Activated naive CD4-positive, alpha-beta T cell treated with anti-CD3 and anti-CD28 coated beads, Interleukin-2, amount 10 ng/mL, durations not matched to agents 7 days and 5 days (primary cell): ENCODE measurements at regions of chr13 and their contacts with region 1.

Region 1: GRCh38 chr13:94674609-94675348 is 37.6 kb downstream of the SOX21 start:
- DNase-seq: peak; percentile 67
- H3K4me3 Mint-ChIP-seq: no peak overlapping the region
- H3K27ac Mint-ChIP-seq: no peak overlapping the region
- H3K4me1 Mint-ChIP-seq: no peaks in the 10 kb centered on the region
- H3K27me3 Mint-ChIP-seq: peaks cover 17% of the 10 kb centered on the region

Region 2: GRCh38 chr13:94470126-94470525 is 204.7 kb before region 1 on chr13:
- CTCF ChIA-PET with region 1: no interaction called
- DNase-seq: no peak
- H3K4me3 Mint-ChIP-seq: no peak overlapping the region
- H3K27ac Mint-ChIP-seq: no peak overlapping the region
- H3K4me1 Mint-ChIP-seq: no peaks in the 10 kb centered on the region
- H3K27me3 Mint-ChIP-seq: no peaks in the 10 kb centered on the region

Region 3: DNA sequence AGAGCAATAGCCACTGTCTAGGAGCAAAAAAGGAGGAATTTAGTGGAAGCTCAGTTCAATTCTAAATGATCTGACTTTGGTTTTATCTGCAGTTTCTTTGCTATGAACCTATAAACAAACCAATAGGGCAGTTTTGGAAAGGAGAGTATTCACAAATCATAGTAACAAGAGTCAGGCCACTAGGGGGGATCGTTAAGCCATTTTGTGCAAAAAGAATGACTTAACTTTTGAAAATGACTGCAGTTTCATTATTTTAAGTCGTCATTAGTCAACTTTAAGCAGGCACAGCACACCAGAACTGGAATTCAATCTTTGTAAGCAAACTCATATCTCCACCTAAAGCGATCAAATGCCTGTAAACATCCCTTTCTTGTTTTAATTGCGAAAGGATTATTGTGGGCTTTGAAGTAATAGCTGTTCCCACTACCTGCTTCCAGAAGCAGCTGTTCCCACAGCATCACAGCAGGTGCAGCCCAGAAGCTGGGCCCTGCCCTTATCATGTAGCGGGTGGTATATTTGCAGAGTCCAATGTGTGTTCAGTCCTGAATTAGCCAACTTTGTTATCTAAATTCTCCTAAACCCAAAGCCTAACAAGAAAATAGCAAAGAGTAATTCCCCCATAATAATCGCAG is 14.0 kb before region 1 on chr13:
- CTCF ChIA-PET with region 1: interaction called, 13 read pairs
- DNase-seq: no peak
- H3K4me3 Mint-ChIP-seq: no peak overlapping the region
- H3K27ac Mint-ChIP-seq: no peak overlapping the region
- H3K4me1 Mint-ChIP-seq: peaks cover 4% of the 10 kb centered on the region
- H3K27me3 Mint-ChIP-seq: peaks cover 15% of the 10 kb centered on the region